Ascending aorta (tissue), 2 donors: ENCODE measurements at regions of chr11 and their contacts with region 1.

Region 1: DNA sequence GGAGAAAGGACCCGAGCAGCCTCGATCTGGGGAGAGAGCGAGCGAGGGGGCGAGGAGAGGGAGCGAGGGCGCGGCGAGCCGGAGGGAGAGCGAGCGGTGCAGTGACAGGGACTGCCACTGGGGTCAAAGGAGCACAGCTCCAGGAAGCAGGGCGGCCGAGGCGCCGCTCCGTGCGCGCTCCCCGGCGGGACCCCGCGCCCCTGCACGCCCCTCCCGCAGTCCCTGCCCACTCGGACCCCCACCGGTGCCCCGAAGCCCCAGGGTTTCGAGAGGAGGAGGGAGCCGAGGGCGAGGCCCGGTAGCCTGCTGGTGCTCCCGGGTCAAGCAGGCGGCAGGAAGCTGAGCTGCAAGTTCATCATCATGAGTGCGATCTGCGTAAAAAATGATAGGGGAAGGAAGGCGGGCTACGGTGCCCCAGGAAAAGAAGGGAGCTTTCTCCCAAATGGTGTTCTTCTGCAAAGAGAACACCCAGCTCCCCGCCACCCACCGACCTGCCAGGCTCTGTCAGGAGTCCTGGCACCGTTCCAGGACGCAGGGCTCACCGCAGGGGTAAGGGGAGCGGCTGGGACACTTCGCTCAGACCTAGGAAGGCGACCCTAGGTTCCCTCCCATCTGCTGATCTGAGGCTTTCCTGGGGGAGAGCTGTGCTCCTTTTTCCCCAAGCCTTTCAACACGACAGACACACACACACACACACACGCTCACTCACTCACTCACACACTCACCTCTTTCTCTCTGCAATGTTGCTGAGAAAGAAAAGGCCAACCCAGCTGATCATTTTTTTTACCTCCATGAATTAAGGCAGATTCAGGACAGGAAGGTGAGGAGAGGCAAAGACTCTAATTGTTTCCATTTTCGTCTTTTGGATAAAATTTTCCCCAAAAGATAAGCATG is at the start of gene MPPED2:
- DNase-seq: peak in 1 of 2 donors; percentile 73
- H3K4me3 ChIP-seq: peak within 1 kb of the TSS; percentile 88 to 96
- H3K27ac ChIP-seq: peak within 1 kb of the TSS; percentile 81 to 98
- H3K4me1 ChIP-seq: peaks cover 0 to 3% of the 10 kb centered on the region in 2 donors
- H3K27me3 ChIP-seq: no peaks in the 10 kb centered on the region
- CTCF ChIP-seq: peak; percentile 42 to 62 (median 49)
- total RNA-seq, gene MPPED2: 5.3 TPM

Region 2: GRCh38 chr11:30346068-30346688 is 240.3 kb before region 1 on chr11:
- intact Hi-C with region 1: loop called (anchors 5 kb)
- DNase-seq: no peak
- H3K4me3 ChIP-seq: no peak overlapping the region
- H3K27ac ChIP-seq: no peak overlapping the region
- H3K4me1 ChIP-seq: no peaks in the 10 kb centered on the region
- H3K27me3 ChIP-seq: no peaks in the 10 kb centered on the region
- CTCF ChIP-seq: peak; percentile 43 to 67 (median 64)

Region 3: GRCh38 chr11:30432178-30432577 is 154.3 kb before region 1 on chr11:
- intact Hi-C with region 1: loop called (anchors 5 kb)
- DNase-seq: no peak
- H3K4me3 ChIP-seq: no peak overlapping the region
- H3K27ac ChIP-seq: peak overlapping the region; percentile 77 to 80
- H3K4me1 ChIP-seq: peaks cover 0 to 35% of the 10 kb centered on the region in 2 donors
- H3K27me3 ChIP-seq: no peaks in the 10 kb centered on the region
- CTCF ChIP-seq: no peak

Region 4: DNA sequence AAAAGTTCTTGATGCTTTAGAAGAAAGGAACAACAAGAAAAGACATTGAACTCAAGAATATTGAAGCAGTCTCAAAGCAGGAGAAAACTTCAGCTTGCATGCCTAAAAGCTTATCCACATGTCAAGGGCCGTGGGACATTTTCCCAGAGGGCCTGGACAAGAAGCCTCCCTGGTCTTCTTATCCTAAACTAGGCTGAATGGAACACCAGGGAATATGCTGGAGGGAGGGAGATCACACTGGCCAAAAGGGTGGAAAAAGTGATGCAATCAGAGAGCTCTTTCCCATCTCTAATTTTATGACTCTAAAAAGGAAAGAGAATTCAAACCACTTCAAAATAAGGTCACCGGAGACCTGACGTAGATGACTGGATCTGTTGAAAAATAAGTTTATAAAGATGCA is 107.6 kb before region 1 on chr11:
- intact Hi-C with region 1: loop called (anchors 2 kb)
- DNase-seq: peak in 1 of 2 donors; percentile 73
- H3K4me3 ChIP-seq: peak overlapping the region in 1 of 2 donors; percentile 26
- H3K27ac ChIP-seq: peak overlapping the region; percentile 80
- H3K4me1 ChIP-seq: peaks cover 6 to 40% of the 10 kb centered on the region in 2 donors
- H3K27me3 ChIP-seq: no peaks in the 10 kb centered on the region
- CTCF ChIP-seq: no peak

Region 5: DNA sequence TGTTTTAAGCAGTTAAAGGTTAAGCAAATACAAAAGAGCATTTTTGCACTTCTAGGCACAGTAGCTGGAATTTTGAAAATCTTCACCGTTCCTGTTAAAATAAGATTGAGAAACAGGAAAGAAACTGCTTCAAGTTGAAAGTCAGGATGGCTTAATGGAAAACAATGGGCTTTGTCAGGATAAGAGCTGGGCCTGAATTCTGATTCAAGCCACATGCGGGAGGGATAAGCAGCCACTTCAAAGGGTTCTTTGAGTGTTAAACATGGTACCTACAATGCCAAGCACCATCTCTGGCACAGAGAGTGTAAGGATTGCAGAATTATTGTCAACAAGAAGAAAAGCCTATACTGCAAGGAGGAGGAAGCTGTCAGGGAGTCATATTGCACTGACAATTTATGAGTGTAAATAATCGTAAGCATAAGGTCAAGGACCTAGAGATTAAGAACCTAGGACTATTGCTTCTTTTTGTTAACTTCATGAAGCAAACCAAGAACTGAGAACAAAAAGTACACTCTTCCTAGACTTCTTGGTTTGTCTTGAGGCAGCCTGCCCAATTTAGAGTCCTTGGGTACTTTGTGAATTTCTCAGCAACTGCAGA is 32.9 kb before region 1 on chr11:
- intact Hi-C with region 1: loop called (anchors 5 kb)
- DNase-seq: no peak
- H3K4me3 ChIP-seq: no peak overlapping the region
- H3K27ac ChIP-seq: peak overlapping the region in 1 of 2 donors; percentile 52
- H3K4me1 ChIP-seq: peaks cover 0 to 14% of the 10 kb centered on the region in 2 donors
- H3K27me3 ChIP-seq: no peaks in the 10 kb centered on the region
- CTCF ChIP-seq: no peak

Region 6: GRCh38 chr11:30567120-30567519 is 19.4 kb before region 1 on chr11:
- intact Hi-C with region 1: no loop called
- DNase-seq: no peak
- H3K4me3 ChIP-seq: peak overlapping the region in 1 of 2 donors; percentile 22
- H3K27ac ChIP-seq: peak overlapping the region; percentile 54 to 78
- H3K4me1 ChIP-seq: peaks cover 8 to 23% of the 10 kb centered on the region in 2 donors
- H3K27me3 ChIP-seq: no peaks in the 10 kb centered on the region
- CTCF ChIP-seq: no peak

Region 7: GRCh38 chr11:30617771-30618170 is 31.3 kb after region 1 on chr11:
- intact Hi-C with region 1: no loop called
- DNase-seq: no peak
- H3K4me3 ChIP-seq: no peak overlapping the region
- H3K27ac ChIP-seq: no peak overlapping the region
- H3K4me1 ChIP-seq: no peaks in the 10 kb centered on the region
- H3K27me3 ChIP-seq: no peaks in the 10 kb centered on the region
- CTCF ChIP-seq: no peak

Region 8: DNA sequence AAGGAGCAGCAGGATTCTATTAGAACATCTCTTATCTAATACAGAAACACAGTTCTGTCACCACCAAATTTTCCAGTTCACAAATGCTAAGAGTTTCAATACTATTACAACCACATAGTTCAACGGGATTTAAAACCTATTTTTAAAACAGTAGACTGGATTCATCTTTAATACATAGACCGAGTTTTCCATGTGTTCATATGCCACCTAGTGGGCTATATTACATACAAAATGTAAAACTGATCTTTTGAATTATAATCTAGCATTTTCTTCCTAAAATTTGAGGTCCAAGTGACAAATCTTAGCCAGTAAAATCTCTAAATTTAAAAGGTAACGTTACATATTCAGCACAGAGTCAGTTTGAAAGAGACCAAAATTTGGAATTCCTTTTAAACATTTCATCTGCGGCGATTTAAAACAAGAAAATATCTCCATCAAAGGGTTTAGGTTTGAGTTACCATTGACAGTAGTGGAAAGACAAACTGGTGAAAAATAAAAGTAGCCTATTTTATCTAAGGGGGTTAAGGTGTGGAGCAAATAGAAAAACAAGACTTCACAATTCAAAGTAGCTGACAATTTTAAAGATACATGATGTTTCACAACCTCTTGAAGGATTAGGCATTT is 269.0 kb after region 1 on chr11:
- intact Hi-C with region 1: loop called (anchors 10 kb)
- DNase-seq: no peak
- H3K4me3 ChIP-seq: no peak overlapping the region
- H3K27ac ChIP-seq: no peak overlapping the region
- H3K4me1 ChIP-seq: peaks cover 0 to 2% of the 10 kb centered on the region in 2 donors
- H3K27me3 ChIP-seq: no peaks in the 10 kb centered on the region
- CTCF ChIP-seq: peak in 2 of 3 experiments; percentile 45 to 64

Region 9: DNA sequence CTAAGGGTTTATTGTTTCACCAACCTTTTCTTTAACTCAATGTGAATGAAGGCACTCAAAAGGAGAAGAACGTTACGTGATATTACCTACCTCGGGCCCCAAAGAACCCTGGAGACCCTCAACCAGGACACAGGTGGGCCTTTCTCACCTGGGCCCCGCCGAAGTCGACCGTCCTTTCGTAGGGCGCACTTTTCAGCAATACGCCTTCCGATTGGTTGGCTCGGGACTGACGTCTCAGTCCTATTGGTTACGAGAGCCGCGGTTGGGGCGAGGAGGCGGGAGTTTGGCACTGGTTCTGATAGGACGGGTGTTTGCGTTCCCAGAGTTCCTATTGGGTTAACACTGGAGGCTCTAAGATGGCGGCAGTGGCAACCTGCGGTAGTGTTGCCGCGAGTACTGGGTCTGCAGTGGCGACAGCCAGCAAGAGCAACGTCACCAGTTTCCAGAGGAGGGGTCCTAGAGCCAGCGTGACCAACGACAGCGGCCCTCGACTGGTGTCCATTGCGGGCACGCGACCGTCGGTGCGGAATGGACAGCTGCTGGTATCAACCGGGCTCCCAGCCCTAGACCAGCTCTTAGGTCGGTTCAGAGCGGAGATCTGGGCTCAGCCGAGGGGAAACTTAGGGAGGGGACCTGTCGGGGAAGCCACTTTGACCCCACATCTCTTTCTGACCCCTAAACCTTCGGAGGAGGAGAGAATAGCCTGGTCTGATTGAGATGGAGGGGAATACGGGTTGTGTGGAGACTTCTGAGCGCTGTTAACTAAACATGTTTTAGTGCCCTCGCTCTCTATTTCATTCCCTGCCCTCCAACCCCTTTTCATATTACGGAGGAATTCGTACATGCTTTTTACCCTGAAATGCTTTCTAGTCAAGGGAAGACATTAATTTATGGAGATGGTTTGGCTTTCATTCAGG is 923.2 kb after region 1 on chr11 and contains the starts of genes ELP4 and IMMP1L:
- intact Hi-C with region 1: loop called (anchors 10 kb)
- DNase-seq: peak; percentile 86 to 98
- H3K4me3 ChIP-seq: peak within 1 kb of the TSS; percentile 56 to 98
- H3K27ac ChIP-seq: peak within 1 kb of the TSS; percentile 65 to 90
- H3K4me1 ChIP-seq: peaks cover 0 to 13% of the 10 kb centered on the region in 2 donors
- H3K27me3 ChIP-seq: no peaks in the 10 kb centered on the region
- CTCF ChIP-seq: no peak
- total RNA-seq, gene ELP4: 37.1 TPM
- total RNA-seq, gene IMMP1L: not detected